ENCODE measurements at regions of chr22 and their contacts with region 1.

Region 1: GRCh38 chr22:21972293-21972779 is 10.3 kb downstream of the TOP3B start:
- DNase-seq: peak; percentile 14 to 47
- ATAC-seq: peak; percentile 63 to 87; a peak in 4 of 6 replicates
- H3K4me3 ChIP-seq: no peak overlapping the region
- H3K27ac ChIP-seq: no peak overlapping the region
- H3K4me1 ChIP-seq: no peaks in the 10 kb centered on the region
- CTCF ChIP-seq: peak; percentile 57
- EP300 ChIP-seq: no peak
- POLR2A ChIP-seq: no peak
- RAD21 ChIP-seq: peak in 1 of 2 experiments; percentile 17; a peak in 2 of 5 replicates

Region 2: GRCh38 chr22:20916983-20917810 is 1055.1 kb before region 1 on chr22 and contains the start of gene CRKL:
- CTCF ChIA-PET with region 1: no interaction called
- POLR2A ChIA-PET with region 1: no interaction called
- DNase-seq: peak; percentile 89 to 94
- ATAC-seq: peak; percentile 97 to 99
- H3K4me3 ChIP-seq: peak within 1 kb of the TSS; percentile 89
- H3K27ac ChIP-seq: peak within 1 kb of the TSS; percentile 95 to 100
- H3K4me1 ChIP-seq: peaks cover 22% of the 10 kb centered on the region
- CTCF ChIP-seq: peak; percentile 76
- EP300 ChIP-seq: no peak
- POLR2A ChIP-seq: peak; percentile 69
- RAD21 ChIP-seq: peak in 1 of 2 experiments; percentile 53; a peak in 3 of 5 replicates
- polyA plus RNA-seq, gene CRKL: 21.4 and 28.9 TPM in 2 replicates

Region 3: DNA sequence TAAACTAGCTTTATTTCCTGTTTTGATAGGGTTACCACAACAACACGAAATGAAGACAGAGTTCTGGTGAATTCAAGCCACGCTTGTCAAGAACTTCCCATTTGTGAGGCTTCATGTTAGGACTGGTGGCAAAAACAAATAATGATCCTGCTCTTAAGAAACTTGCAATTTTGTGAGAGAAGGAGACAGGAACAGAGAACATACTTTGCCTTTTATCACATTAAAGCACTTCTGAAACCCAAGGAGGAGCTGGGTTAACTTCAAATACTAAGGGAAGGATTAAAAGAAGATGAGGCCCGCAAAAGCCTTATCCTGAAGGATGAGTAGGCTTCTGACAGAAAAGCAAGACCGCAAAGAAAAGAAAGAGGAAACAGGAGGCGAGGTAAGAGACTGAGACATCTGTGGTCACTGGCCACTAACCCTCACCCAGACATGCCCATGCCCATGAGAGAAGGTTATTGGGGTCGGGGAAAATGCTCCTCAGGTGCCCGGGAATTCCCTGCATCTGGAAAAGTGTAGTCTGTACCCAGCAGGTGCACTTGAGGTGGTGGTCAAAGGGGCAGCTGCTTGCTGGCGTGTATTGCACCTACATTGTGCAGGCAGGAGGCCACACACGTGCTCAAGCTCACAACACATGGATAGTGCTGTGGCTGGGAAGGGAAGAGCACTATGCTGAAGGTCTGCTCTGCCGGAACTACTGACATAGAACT is 155.4 kb before region 1 on chr22:
- CTCF ChIA-PET with region 1: no interaction called
- POLR2A ChIA-PET with region 1: no interaction called
- DNase-seq: peak; percentile 48 to 61
- ATAC-seq: peak; percentile 69 to 71
- H3K4me3 ChIP-seq: no peak overlapping the region
- H3K27ac ChIP-seq: no peak overlapping the region
- H3K4me1 ChIP-seq: 0 out of 3 replicates have a peak, but pooled peaks cover 11% of the 10 kb centered on the region
- CTCF ChIP-seq: no peak
- EP300 ChIP-seq: no peak
- POLR2A ChIP-seq: no peak
- RAD21 ChIP-seq: no peak

Region 4: DNA sequence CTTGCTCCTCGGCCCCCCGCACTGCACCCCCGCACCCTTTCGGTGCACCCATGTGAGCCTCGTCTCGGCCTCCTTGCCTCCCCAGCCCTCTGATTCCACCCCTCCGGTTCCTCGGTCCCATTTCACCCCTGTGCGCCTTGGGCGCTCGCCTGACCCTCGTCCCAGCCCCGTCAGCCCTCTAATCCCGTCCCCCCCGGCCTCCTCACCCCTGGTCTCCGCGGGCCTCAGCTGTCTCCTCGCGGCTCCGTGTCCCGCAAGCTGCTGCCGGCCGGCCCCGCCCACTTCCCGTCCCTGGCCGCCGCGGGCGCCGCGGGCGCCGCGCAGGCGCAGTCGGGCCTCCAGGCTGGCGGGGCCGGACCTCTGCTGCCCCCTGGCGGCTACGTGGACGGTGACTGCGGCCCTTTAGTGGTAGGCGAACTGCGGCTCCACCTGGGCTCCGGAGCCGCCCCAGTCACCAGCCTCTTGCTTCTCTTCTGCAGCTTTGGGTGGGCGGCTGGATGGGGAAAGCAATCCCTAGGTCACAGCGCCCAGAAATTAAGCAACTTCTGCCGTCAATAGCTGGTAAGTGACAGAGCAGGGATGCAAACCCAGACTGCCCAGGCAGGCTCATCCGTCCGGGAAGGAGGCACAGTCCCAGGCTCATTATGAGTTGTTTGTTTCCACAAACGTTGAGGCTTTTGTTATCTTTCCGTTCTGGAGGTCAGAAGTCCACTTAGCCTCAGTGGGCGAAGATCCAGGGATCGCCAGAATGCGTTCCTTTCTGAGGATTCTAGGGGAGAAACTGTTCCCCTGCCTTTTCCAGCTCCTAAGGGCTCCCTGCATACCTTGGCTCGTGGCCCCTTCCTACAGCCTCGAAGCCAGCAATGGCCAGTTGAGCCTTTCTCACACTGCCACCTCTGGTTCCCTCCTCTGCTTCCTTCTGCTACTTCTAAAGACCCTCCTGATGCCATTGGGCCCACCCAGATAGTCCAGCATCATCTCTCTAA is 19.5 kb before region 1 on chr22 and contains the start of gene PPM1F:
- CTCF ChIA-PET with region 1: interaction called, 21 read pairs
- POLR2A ChIA-PET with region 1: no interaction called
- DNase-seq: peak; percentile 51 to 55
- ATAC-seq: peak; percentile 81 to 83
- H3K4me3 ChIP-seq: peak within 1 kb of the TSS; percentile 74
- H3K27ac ChIP-seq: peak within 1 kb of the TSS; percentile 85 to 91
- H3K4me1 ChIP-seq: 0 out of 3 replicates have a peak, but pooled peaks cover 4% of the 10 kb centered on the region
- CTCF ChIP-seq: peak; percentile 80
- EP300 ChIP-seq: no peak
- POLR2A ChIP-seq: peak; percentile 41
- RAD21 ChIP-seq: peak; percentile 39 to 54
- polyA plus RNA-seq, gene PPM1F: 9.4 and 11.0 TPM in 2 replicates

Region 5: DNA sequence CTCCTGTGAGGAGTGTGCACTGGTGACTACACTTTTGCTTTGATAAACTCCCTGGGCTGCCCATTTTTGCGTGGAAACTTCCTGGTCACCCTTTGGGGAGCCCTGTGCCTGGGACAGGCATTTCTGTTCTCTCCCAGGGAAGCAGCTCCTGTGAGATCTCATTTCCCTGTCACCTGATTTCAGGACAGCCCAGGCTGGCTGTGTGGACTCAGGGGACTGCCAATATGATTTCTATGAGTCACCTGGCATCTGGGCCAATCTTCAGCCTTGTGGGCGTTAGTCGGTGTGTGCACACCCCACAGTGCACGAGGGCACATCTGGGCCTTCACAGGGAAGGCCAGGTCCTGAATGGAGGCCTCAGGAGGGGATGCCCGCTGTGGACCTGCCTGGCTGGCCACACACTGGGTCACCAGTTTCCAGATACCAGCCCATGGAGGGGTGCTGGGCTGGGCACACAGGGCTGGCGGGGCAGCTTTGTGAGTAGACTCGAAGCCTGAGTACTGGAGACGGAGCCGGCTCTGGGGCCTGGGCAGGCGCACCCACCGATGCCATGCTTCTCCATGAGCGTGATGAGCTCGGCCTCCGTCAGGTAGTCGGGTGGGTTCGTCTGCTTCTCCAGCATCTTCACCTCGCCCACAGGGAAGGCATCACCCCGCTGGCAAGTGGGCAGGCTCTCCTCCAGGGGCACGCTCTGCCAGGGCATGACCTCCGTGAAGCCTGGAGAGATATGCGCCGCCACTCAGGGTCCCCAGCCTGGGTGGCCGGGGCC is 10.3 kb before region 1 on chr22:
- CTCF ChIA-PET with region 1: interaction called, 16 read pairs
- POLR2A ChIA-PET with region 1: no interaction called
- DNase-seq: peak in 1 of 2 experiments; percentile 28
- ATAC-seq: peak; percentile 45 to 48; a peak in 4 of 6 replicates
- H3K4me3 ChIP-seq: no peak overlapping the region
- H3K27ac ChIP-seq: no peak overlapping the region
- H3K4me1 ChIP-seq: no peaks in the 10 kb centered on the region
- CTCF ChIP-seq: no peak
- EP300 ChIP-seq: no peak
- POLR2A ChIP-seq: no peak
- RAD21 ChIP-seq: no peak

Region 6: GRCh38 chr22:21982338-21982965 is 10.1 kb after region 1 on chr22 and contains the start of gene TOP3B:
- CTCF ChIA-PET with region 1: interaction called, 19 read pairs
- POLR2A ChIA-PET with region 1: interaction called, 7 read pairs
- DNase-seq: peak; percentile 46 to 75
- ATAC-seq: peak; percentile 86 to 91
- H3K4me3 ChIP-seq: peak within 1 kb of the TSS; percentile 98
- H3K27ac ChIP-seq: peak within 1 kb of the TSS; percentile 93 to 99
- H3K4me1 ChIP-seq: peaks cover 9% of the 10 kb centered on the region; the same call in 1 of the 3 replicates
- CTCF ChIP-seq: no peak
- EP300 ChIP-seq: no peak
- POLR2A ChIP-seq: peak; percentile 82
- RAD21 ChIP-seq: no peak
- polyA plus RNA-seq, gene TOP3B: 11.5 and 16.7 TPM in 2 replicates

Region 7: GRCh38 chr22:21990445-21991303 is 18.3 kb after region 1 on chr22:
- CTCF ChIA-PET with region 1: interaction called, 10 read pairs
- POLR2A ChIA-PET with region 1: interaction called, 7 read pairs
- DNase-seq: no peak
- ATAC-seq: no peak
- H3K4me3 ChIP-seq: no peak overlapping the region
- H3K27ac ChIP-seq: no peak overlapping the region
- H3K4me1 ChIP-seq: no peaks in the 10 kb centered on the region
- CTCF ChIP-seq: no peak
- EP300 ChIP-seq: no peak
- POLR2A ChIP-seq: no peak
- RAD21 ChIP-seq: no peak

Region 8: DNA sequence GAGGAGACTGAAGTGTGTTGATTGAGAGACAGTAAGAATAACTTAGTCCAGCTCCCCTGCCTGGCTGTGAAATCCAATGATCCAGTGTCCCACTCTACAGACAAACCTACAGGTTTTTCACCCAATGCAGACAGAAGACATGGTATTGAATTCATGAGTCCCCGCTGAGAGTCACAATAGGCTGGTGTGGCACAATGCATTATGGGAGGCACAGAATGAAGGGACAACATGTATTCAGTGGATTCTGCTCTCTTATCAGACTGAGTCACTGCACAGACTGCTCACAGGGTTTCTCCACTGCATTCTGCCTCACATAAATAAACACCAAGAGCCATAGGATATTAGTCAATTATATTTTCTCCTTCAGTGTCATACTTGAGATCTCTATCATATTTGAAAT is 65.4 kb after region 1 on chr22:
- CTCF ChIA-PET with region 1: no interaction called
- POLR2A ChIA-PET with region 1: no interaction called
- DNase-seq: no peak
- ATAC-seq: no peak; a peak in 1 of 6 replicates
- H3K4me3 ChIP-seq: no peak overlapping the region
- H3K27ac ChIP-seq: no peak overlapping the region
- H3K4me1 ChIP-seq: no peaks in the 10 kb centered on the region
- CTCF ChIP-seq: no peak
- EP300 ChIP-seq: no peak
- POLR2A ChIP-seq: no peak
- RAD21 ChIP-seq: no peak

Measured in A549 (cell line).